HAP-1 (cell line): ENCODE measurements at regions of chr18 and their contacts with region 1.

Region 1: DNA sequence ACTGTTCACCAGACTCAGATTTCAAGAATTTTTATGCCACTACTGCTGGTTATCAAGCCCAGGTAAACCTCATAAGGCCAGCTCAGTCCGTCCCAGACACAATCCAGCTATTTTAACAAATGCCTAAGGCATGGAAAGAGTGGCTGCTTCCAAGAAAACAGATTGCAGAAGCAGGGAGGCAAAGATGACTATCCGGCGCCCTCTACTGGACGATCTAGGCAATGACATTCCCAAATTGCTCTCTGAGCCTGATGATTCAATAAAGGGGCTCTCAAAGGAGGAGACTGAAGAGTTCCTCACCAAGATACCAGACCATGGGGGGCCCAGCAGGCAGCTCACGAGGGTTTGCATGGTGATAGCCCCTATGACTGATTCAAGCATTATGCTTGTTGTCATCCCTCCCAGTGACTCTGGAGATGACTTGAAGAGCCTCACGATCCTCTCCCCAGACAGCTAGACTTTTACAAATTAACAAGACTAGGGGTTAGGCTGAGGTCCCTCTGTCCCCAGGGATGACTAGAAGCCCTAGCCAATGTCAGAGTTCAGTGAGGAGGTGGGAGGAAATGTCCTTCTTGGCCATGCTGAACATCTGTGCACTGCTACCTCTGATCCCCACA is 25.0 kb downstream of the SERPINB8 start:
- DNase-seq: peak; percentile 44 to 66
- H3K4me3 ChIP-seq: no peak overlapping the region
- H3K4me1 ChIP-seq: no peaks in the 10 kb centered on the region
- H3K27me3 ChIP-seq: no peaks in the 10 kb centered on the region

Region 2: GRCh38 chr18:63890950-63891304 is 104.0 kb before region 1 on chr18:
- in situ Hi-C with region 1: loop called (anchors 10 kb)
- DNase-seq: no peak
- H3K4me3 ChIP-seq: no peak overlapping the region
- H3K4me1 ChIP-seq: no peaks in the 10 kb centered on the region
- H3K27me3 ChIP-seq: no peaks in the 10 kb centered on the region